Activated naive CD4-positive, alpha-beta T cell treated with anti-CD3 and anti-CD28 coated beads for 36 hours (primary cell): ENCODE measurements at regions of chr14 and their contacts with region 1.

Region 1: DNA sequence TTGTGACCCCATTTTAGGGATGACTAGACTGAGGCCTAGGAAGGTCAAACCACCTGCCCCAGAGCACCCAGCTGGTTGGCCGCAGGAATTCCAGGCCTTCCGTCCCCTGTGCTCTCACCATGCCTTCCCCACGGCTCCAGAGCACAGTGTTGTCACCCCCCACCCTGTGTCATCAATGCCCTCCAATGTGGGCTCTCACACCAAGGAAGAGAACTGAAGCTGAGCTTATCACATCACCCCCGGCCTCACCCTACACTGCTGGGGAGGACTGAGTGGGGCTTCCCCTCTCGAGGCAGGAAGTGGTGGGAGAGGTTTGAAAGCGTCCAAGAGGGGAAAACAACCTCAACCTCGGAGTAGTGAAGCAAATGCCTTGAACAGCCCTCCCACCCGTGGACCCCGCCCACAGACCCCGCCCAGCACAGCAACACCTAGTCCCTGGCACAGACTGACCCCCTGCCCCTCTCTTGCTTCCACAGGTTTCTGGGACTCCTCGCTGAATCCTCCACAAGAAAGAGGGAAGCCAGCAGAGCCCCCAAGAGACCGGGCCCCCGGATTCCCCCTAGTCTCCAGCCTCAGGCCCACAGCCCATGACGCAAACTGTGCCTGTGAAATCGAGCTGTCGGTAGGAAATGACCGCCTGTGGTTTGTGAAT is 97.2 kb downstream of the LGMN start:
- DNase-seq: peak; percentile 93
- H3K4me3 Mint-ChIP-seq: peak overlapping the region; percentile 93
- H3K27ac Mint-ChIP-seq: peak overlapping the region; percentile 97
- H3K4me1 Mint-ChIP-seq: peaks cover 76% of the 10 kb centered on the region
- H3K27me3 Mint-ChIP-seq: no peaks in the 10 kb centered on the region

Region 2: DNA sequence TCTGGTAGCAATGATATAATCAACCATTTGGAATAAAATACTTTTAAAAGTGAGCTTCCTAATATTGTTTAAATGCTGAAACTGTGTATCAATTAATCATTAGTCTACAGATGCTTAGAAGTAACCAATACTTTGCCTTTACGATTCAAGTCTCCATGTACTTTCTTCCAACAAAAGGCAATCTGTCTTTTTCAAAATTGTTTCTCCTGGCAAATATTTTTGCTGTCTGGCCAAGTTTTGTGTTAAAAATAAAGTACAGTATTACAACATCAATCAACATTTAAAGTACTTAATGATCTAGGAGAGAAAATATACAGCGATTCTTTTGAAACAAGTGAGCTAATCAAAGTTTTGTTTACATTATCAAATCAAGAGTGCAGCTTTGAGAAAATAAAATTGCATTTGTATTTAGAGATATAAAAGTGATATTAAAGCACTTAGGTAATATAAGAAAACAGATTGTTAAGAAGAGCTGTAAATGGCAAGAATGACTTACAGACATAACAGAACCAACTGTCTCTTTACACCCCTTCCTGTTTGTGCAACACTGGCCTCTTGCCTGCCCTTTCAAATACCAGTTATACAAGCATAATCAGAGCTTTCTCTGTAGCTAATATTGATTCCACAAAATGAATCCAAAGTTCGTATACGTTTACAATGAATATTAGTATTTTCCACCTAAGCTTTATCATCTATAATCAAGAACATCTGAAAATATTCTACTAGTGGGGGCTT is 665.5 kb before region 1 on chr14:
- CTCF ChIA-PET with region 1: no interaction called
- intact Hi-C with region 1: no loop called
- DNase-seq: no peak
- H3K4me3 Mint-ChIP-seq: no peak overlapping the region
- H3K27ac Mint-ChIP-seq: no peak overlapping the region
- H3K4me1 Mint-ChIP-seq: peaks cover 4% of the 10 kb centered on the region
- H3K27me3 Mint-ChIP-seq: no peaks in the 10 kb centered on the region

Region 3: DNA sequence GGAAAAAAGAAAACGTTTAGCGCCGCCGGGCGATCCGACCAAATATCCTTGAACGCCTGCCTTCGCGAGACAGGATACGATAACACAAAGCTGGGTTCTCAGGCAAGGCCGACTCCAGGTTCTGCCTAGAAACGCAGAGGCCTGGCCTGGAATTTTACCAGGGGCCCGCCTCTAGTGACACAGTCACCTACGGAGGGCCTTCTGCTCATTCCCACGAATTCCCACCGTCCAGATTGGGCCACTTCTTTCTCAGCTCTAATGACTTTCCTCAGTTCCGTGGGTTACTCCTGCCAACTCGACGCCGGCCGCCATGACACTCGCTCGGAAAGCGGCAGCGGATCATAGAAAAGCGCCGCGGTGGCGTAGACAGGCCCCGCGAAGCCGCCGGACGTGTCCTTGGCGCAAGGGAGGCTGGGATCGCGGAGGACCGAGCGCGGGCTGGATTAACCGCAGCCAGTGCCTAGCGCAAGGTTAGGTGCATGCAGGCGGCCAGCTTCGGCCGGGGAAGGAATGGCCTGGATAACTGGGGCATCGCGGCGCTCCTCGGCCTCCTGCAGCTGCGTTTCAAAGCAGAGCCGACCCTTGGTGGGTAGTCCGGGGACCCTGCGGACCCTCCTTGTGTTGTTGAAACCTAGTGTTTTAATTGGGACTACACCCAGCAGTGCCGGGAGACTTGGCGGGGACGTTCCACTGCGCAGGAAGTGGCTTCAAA is 611.4 kb before region 1 on chr14 and contains the start of gene TRIP11:
- CTCF ChIA-PET with region 1: no interaction called
- intact Hi-C with region 1: loop called (anchors 1 kb)
- DNase-seq: peak; percentile 97
- H3K4me3 Mint-ChIP-seq: peak within 1 kb of the TSS; percentile 98
- H3K27ac Mint-ChIP-seq: peak within 1 kb of the TSS; percentile 98
- H3K4me1 Mint-ChIP-seq: peaks cover 32% of the 10 kb centered on the region
- H3K27me3 Mint-ChIP-seq: no peaks in the 10 kb centered on the region
- total RNA-seq, gene TRIP11: 22.7 to 26.1 TPM

Region 4: DNA sequence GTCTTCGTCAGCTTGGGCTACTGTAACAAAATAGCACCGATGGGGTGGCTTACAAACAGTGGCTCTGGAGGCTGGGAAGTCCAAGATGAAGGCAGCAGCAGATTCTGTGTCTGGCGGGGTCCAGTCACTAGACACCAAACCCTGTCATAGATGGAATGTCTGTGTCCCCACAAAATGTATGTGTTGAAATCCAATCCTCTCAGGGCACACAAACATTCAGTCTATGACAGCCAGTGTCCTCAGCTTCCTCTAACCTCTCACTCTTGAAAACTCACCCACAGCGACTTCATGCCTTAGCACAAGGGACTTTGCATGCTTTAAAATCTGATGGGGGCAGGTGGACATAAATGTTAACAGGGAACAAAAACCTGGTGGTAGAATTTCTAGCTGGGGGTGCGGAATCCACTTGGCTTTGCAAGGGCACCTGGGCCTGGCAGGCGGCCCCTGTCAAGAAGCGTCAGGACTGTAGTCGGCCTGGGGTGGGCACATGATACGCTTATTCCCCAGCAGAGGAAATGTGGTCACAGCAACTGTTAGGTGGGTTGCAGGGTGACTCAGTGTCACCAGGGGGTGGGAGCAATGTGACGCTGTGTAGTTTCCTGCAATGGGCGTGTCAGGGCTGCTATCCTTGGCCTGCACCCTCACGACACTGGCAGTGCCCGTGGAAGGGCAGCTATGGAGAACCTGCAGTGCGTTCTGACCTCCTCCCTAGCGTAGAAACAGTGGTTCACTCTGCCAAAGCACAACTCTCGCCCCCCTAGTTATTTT is 119.9 kb before region 1 on chr14:
- CTCF ChIA-PET with region 1: no interaction called
- intact Hi-C with region 1: loop called (anchors 5 kb)
- DNase-seq: peak; percentile 62
- H3K4me3 Mint-ChIP-seq: peak overlapping the region; percentile 25
- H3K27ac Mint-ChIP-seq: peak overlapping the region; percentile 85
- H3K4me1 Mint-ChIP-seq: peaks cover 68% of the 10 kb centered on the region
- H3K27me3 Mint-ChIP-seq: peaks cover 3% of the 10 kb centered on the region

Region 5: DNA sequence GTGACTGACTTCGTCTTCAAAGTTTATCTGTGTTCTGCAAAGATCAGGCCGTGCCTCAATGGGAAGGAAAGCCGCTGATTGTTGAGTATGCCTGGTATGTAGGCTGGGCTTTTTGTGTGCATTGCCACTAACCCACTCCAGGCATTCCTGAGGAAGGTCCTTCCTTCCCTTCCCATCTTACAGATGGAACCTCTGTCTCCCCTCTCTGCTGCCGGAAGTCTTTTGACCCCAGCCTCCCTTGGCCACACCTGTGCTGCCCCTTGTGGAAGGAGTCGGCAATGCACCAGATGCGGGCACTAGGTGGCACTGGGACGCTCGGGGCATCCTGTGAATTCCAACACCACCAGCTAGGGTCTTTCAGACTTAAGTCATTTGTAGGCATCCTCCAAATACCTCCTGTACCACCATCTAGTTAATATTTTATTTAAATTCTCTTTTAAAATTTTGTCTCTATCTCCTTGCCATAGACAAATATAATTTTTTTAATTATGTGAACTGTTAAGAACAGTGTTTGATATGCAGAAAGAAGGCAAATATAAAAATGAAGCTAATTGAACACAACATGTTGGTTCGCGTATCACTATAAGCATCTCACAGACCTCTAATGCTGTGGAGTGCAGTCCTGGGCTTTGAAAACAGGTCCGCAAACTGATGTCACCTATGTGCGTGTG is 38.1 kb before region 1 on chr14:
- CTCF ChIA-PET with region 1: interaction called, 12 read pairs
- intact Hi-C with region 1: loop called (anchors 1 kb)
- DNase-seq: peak; percentile 87
- H3K4me3 Mint-ChIP-seq: no peak overlapping the region
- H3K27ac Mint-ChIP-seq: no peak overlapping the region
- H3K4me1 Mint-ChIP-seq: peaks cover 52% of the 10 kb centered on the region
- H3K27me3 Mint-ChIP-seq: no peaks in the 10 kb centered on the region

Region 6: GRCh38 chr14:92680781-92681650 is 29.8 kb after region 1 on chr14:
- CTCF ChIA-PET with region 1: interaction called, 12 read pairs
- intact Hi-C with region 1: loop called (anchors 1 kb)
- DNase-seq: peak; percentile 85
- H3K4me3 Mint-ChIP-seq: no peak overlapping the region
- H3K27ac Mint-ChIP-seq: peak overlapping the region; percentile 68
- H3K4me1 Mint-ChIP-seq: peaks cover 30% of the 10 kb centered on the region
- H3K27me3 Mint-ChIP-seq: no peaks in the 10 kb centered on the region